CD4-positive, alpha-beta memory T cell (primary cell): ENCODE measurements at regions of chr12 and their contacts with region 1.

Region 1: GRCh38 chr12:88141770-88142609 is at the starts of genes CEP290 and TMTC3:
- DNase-seq: peak; percentile 94 to 99 (median 95)
- H3K4me3 ChIP-seq: peak within 1 kb of the TSS; percentile 87 to 88
- H3K4me3 Mint-ChIP-seq: peak within 1 kb of the TSS; percentile 94 to 98 (median 96)
- H3K27ac ChIP-seq: peak within 1 kb of the TSS; percentile 76
- H3K27ac Mint-ChIP-seq: peak within 1 kb of the TSS; percentile 90 to 99 (median 98)
- H3K4me1 ChIP-seq: peaks cover 29% of the 10 kb centered on the region
- H3K4me1 Mint-ChIP-seq: peaks cover 27 to 52% (median 41%) of the 10 kb centered on the region in 4 donors
- H3K27me3 ChIP-seq: no peaks in the 10 kb centered on the region
- H3K27me3 Mint-ChIP-seq: no peaks in the 10 kb centered on the region
- total RNA-seq, gene CEP290: 22.4 to 23.0 TPM
- total RNA-seq, gene TMTC3: 11.5 to 15.2 TPM

Region 2: GRCh38 chr12:88035271-88035906 is 106.6 kb before region 1 on chr12:
- CTCF ChIA-PET with region 1: no interaction called
- POLR2A ChIA-PET with region 1: interaction called, 10 read pairs
- intact Hi-C with region 1: loop called (anchors 1 kb)
- DNase-seq: peak; percentile 84 to 89 (median 86)
- H3K4me3 ChIP-seq: peak overlapping the region; percentile 42 to 82
- H3K4me3 Mint-ChIP-seq: peak overlapping the region; percentile 92 to 99 (median 96)
- H3K27ac ChIP-seq: peak overlapping the region; percentile 56
- H3K27ac Mint-ChIP-seq: peak overlapping the region; percentile 85 to 98 (median 95)
- H3K4me1 ChIP-seq: peaks cover 41% of the 10 kb centered on the region
- H3K4me1 Mint-ChIP-seq: peaks cover 33 to 53% (median 45%) of the 10 kb centered on the region in 4 donors
- H3K27me3 ChIP-seq: no peaks in the 10 kb centered on the region
- H3K27me3 Mint-ChIP-seq: no peaks in the 10 kb centered on the region

Region 3: GRCh38 chr12:88111074-88111652 is 30.8 kb before region 1 on chr12:
- CTCF ChIA-PET with region 1: interaction called, 3 read pairs
- POLR2A ChIA-PET with region 1: no interaction called
- intact Hi-C with region 1: loop called (anchors 2 kb)
- DNase-seq: peak in 4 of 5 donors; percentile 16 to 27 (median 22)
- H3K4me3 ChIP-seq: no peak overlapping the region
- H3K4me3 Mint-ChIP-seq: peak overlapping the region in 7 of 8 donors; percentile 45 to 77 (median 64)
- H3K27ac ChIP-seq: no peak overlapping the region
- H3K27ac Mint-ChIP-seq: peak overlapping the region in 3 of 7 donors; percentile 43 to 84 (median 75)
- H3K4me1 ChIP-seq: no peaks in the 10 kb centered on the region
- H3K4me1 Mint-ChIP-seq: peaks cover 2 to 5% (median 3%) of the 10 kb centered on the region in 4 donors
- H3K27me3 ChIP-seq: no peaks in the 10 kb centered on the region
- H3K27me3 Mint-ChIP-seq: no peaks in the 10 kb centered on the region

Region 4: DNA sequence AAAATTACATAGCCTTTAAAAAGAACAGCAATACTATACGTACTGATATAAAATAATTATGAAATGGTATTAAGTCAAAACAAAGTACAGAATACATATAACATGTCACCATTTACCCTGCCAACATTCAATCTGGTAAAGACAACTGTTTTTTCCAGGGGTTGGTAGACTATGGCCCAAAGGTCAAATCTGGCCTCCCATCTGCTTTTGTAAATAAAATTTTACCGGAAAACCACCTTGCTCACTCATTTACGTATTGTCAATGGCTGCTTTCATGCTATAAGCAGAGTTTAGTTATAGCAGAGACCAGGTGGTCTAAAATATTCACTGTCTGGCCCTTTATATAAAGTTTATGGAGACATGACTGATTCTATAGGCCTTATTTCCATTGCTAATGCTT is 14.1 kb before region 1 on chr12:
- CTCF ChIA-PET with region 1: no interaction called
- POLR2A ChIA-PET with region 1: no interaction called
- intact Hi-C with region 1: loop called (anchors 2 kb)
- DNase-seq: no peak
- H3K4me3 ChIP-seq: no peak overlapping the region
- H3K4me3 Mint-ChIP-seq: no peak overlapping the region
- H3K27ac ChIP-seq: no peak overlapping the region
- H3K27ac Mint-ChIP-seq: no peak overlapping the region
- H3K4me1 ChIP-seq: no peaks in the 10 kb centered on the region
- H3K4me1 Mint-ChIP-seq: peaks cover 0 to 4% (median 0%) of the 10 kb centered on the region in 4 donors
- H3K27me3 ChIP-seq: no peaks in the 10 kb centered on the region
- H3K27me3 Mint-ChIP-seq: no peaks in the 10 kb centered on the region